AG04450 (cell line): ENCODE measurements at regions of chrX and their contacts with region 1.

Region 1: GRCh38 chrX:136028251-136028984 is 43.2 kb downstream of the SLC9A6 start:
- DNase-seq: no peak
- H3K4me3 ChIP-seq: no peak overlapping the region
- H3K27ac ChIP-seq: no peak overlapping the region
- H3K27me3 ChIP-seq: no peaks in the 10 kb centered on the region
- CTCF ChIP-seq: peak; percentile 57

Region 2: GRCh38 chrX:135625995-135626394 is 402.4 kb before region 1 on chrX:
- CTCF ChIA-PET with region 1: no interaction called
- POLR2A ChIA-PET with region 1: no interaction called
- DNase-seq: no peak
- H3K4me3 ChIP-seq: no peak overlapping the region
- H3K27ac ChIP-seq: no peak overlapping the region
- H3K27me3 ChIP-seq: no peaks in the 10 kb centered on the region
- CTCF ChIP-seq: peak; percentile 13; the same call in 1 of the 2 replicates

Region 3: DNA sequence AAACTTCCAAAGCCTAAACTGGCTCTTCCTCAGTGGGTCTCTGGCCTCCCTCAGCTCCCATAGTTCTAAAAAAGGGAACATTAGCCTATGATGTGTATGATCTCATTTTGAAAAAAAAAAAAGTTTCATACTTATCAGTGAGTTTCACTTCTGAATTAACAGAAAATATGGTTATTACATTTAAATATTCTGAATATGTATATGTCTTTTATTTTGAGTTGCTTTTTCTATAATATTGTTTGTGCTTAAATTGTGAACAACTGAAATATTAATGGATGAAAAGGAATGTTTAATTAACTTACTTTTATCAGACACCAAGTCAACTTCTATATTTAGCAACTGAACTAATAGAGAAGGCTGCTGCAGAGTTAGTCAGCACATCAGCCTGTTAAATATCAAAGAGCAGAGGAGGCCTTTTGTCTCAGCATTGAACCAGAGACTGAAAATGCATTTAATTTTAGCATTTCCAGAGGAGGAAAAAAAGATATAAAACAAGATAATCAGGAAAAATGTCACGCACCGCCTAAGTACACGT is 98.5 kb after region 1 on chrX:
- CTCF ChIA-PET with region 1: no interaction called
- POLR2A ChIA-PET with region 1: no interaction called
- DNase-seq: no peak
- H3K4me3 ChIP-seq: no peak overlapping the region
- H3K27ac ChIP-seq: no peak overlapping the region
- H3K27me3 ChIP-seq: no peaks in the 10 kb centered on the region
- CTCF ChIP-seq: no peak

Region 4: GRCh38 chrX:136162831-136163570 is 134.6 kb after region 1 on chrX:
- CTCF ChIA-PET with region 1: interaction called, 93 read pairs
- POLR2A ChIA-PET with region 1: interaction called, 4 read pairs
- DNase-seq: no peak
- H3K4me3 ChIP-seq: no peak overlapping the region
- H3K27ac ChIP-seq: no peak overlapping the region
- H3K27me3 ChIP-seq: no peaks in the 10 kb centered on the region
- CTCF ChIP-seq: peak; percentile 77

Region 5: GRCh38 chrX:136200466-136200865 is 172.0 kb after region 1 on chrX:
- CTCF ChIA-PET with region 1: interaction called, 26 read pairs
- POLR2A ChIA-PET with region 1: interaction called, 3 read pairs
- DNase-seq: no peak
- H3K4me3 ChIP-seq: no peak overlapping the region
- H3K27ac ChIP-seq: no peak overlapping the region
- H3K27me3 ChIP-seq: no peaks in the 10 kb centered on the region
- CTCF ChIP-seq: peak; percentile 43

Region 6: GRCh38 chrX:136268051-136269048 is 239.9 kb after region 1 on chrX:
- CTCF ChIA-PET with region 1: interaction called, 92 read pairs
- POLR2A ChIA-PET with region 1: no interaction called
- DNase-seq: no peak
- H3K4me3 ChIP-seq: no peak overlapping the region
- H3K27ac ChIP-seq: no peak overlapping the region
- H3K27me3 ChIP-seq: no peaks in the 10 kb centered on the region
- CTCF ChIP-seq: peak; percentile 76